Pancreas (tissue), 10 donors: ENCODE measurements at regions of chr4 and their contacts with region 1.

Region 1: GRCh38 chr4:81052119-81053068 is 21.9 kb downstream of the BMP3 start:
- DNase-seq: peak in 5 of 6 donors; percentile 19 to 72 (median 55)
- ATAC-seq: peak; percentile 75 to 93 (median 86)
- H3K4me3 ChIP-seq: no peak overlapping the region
- H3K27ac ChIP-seq: no peak overlapping the region
- H3K4me1 ChIP-seq: peaks cover 0 to 6% (median 0%) of the 10 kb centered on the region in 3 donors
- H3K27me3 ChIP-seq: no peaks in the 10 kb centered on the region
- CTCF ChIP-seq: peak; percentile 40 to 67 (median 42)

Region 2: GRCh38 chr4:80362578-80363181 is 689.7 kb before region 1 on chr4:
- intact Hi-C with region 1: loop called in 1 of 3 experiments (anchors 5 kb)
- DNase-seq: peak in 1 of 6 donors; percentile 46
- ATAC-seq: peak in 2 of 4 donors; percentile 56 to 65
- H3K4me3 ChIP-seq: no peak overlapping the region
- H3K27ac ChIP-seq: no peak overlapping the region
- H3K4me1 ChIP-seq: no peaks in the 10 kb centered on the region
- H3K27me3 ChIP-seq: peaks cover 0 to 6% (median 0%) of the 10 kb centered on the region in 4 donors
- CTCF ChIP-seq: no peak

Region 3: DNA sequence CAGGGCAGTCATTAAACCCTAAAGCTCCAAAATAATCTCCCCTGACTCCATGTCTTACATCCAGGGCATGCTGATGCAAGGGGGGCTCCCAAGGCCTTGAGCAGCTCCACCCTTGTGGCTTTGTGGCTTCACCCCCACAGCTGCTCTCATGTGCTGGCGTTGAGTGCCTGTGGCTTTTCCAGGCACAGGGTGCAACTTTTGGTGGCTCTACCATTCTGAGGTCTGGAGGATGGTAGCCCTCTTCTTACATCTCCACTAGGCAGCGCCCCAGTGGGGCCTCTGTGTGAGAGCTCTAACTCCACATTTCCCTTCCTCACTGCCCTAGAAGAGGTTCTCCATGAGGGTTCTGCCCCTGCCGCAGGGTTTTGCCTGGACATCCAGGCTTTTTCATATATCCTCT is 681.8 kb before region 1 on chr4:
- intact Hi-C with region 1: loop called in 1 of 3 experiments (anchors 10 kb)
- DNase-seq: no peak
- ATAC-seq: no peak
- H3K4me3 ChIP-seq: no peak overlapping the region
- H3K27ac ChIP-seq: no peak overlapping the region
- H3K4me1 ChIP-seq: no peaks in the 10 kb centered on the region
- H3K27me3 ChIP-seq: no peaks in the 10 kb centered on the region
- CTCF ChIP-seq: no peak

Region 4: GRCh38 chr4:81180916-81181315 is 128.5 kb after region 1 on chr4:
- intact Hi-C with region 1: no loop called
- DNase-seq: no peak
- ATAC-seq: no peak
- H3K4me3 ChIP-seq: no peak overlapping the region
- H3K27ac ChIP-seq: no peak overlapping the region
- H3K4me1 ChIP-seq: no peaks in the 10 kb centered on the region
- H3K27me3 ChIP-seq: no peaks in the 10 kb centered on the region
- CTCF ChIP-seq: no peak